Vagina (tissue), 2 donors: ENCODE measurements at regions of chr13 and their contacts with region 1.

Region 1: DNA sequence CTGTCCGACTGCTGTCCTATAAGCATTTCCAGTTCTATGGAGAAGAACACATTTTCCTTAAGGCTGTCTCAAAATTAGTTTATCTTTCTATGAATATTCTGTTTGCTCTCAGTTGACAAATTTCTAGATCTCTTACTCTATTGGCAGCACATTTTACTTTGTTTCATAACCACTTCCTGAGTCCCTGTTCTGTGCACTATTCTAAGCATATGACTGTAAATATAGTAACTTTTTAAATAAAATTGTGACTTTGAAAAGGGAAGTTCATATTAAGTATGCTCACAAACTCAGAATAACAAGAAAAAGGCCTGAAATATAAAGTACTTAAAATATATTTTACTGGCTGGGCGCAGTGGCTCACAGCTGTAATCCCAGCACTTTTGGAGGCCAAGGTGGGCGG is 56.5 kb upstream of the HTR2A start:
- DNase-seq: no peak
- H3K4me3 ChIP-seq: no peak overlapping the region
- H3K27ac ChIP-seq: no peak overlapping the region
- H3K4me1 ChIP-seq: no peaks in the 10 kb centered on the region
- H3K27me3 ChIP-seq: no peaks in the 10 kb centered on the region
- CTCF ChIP-seq: no peak
- POLR2A ChIP-seq: no peak

Region 2: DNA sequence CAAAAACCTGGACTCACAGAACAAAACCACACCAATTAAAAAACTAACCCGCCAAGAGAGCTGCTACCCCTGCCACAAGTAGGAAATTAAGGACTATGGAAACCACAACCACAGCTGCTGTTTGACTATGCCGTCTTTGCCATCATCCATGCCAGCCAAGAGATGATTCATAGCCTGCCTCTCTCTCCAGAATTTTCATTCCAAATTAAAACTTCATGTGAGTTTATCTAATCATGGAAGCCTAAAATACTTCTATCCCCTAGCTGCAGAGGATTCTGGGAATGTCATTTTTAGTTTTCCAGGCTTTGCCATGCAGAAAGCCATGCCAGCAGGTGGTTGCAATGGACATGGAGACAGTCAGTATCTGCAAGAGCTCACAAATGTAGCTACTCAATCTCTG is 1860.7 kb before region 1 on chr13:
- intact Hi-C with region 1: loop called (anchors 10 kb)
- DNase-seq: no peak
- H3K4me3 ChIP-seq: no peak overlapping the region
- H3K27ac ChIP-seq: no peak overlapping the region
- H3K4me1 ChIP-seq: no peaks in the 10 kb centered on the region
- H3K27me3 ChIP-seq: no peaks in the 10 kb centered on the region
- CTCF ChIP-seq: no peak
- POLR2A ChIP-seq: no peak

Region 3: DNA sequence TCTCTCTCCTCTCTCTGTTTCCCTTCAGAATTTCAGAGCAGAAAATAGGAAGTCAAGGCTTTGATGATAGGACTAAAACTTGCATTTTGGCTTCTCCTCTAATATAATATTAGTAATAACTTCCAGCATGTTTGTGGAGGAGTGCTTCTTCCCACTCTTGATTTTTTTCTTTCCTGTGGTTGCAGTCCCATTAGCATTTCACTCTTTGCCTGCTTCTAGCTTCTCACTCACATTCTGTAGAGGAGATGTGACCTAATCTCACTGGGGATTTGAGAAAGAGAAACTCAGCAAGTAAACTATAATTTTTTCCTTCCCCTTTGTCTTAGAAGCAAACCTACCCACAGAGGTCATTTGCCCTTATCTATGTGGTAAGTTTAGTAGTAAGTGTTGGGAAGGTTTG is 112.9 kb after region 1 on chr13:
- intact Hi-C with region 1: no loop called
- DNase-seq: no peak
- H3K4me3 ChIP-seq: no peak overlapping the region
- H3K27ac ChIP-seq: no peak overlapping the region
- H3K4me1 ChIP-seq: no peaks in the 10 kb centered on the region
- H3K27me3 ChIP-seq: no peaks in the 10 kb centered on the region
- CTCF ChIP-seq: no peak
- POLR2A ChIP-seq: no peak

Region 4: DNA sequence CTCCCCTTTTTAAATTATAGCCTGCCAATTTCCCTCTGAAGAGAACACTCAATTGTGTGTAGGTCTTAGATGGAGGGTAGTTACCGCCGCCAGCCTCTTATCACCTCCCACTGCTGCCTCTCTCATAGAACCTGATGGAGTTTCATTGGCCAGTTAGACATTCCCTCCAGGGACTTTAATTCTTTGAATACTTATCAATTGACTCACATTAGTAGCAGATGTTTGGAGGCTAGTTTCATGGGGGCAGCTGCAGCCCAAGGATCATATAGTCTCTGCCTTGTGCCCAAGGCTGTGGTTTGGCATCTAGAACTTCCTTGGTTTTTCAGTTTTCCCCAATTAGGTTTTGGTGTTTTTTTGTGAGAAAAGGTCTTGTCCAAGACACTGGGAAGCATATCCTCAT is 262.4 kb after region 1 on chr13:
- intact Hi-C with region 1: no loop called
- DNase-seq: no peak
- H3K4me3 ChIP-seq: no peak overlapping the region
- H3K27ac ChIP-seq: no peak overlapping the region
- H3K4me1 ChIP-seq: no peaks in the 10 kb centered on the region
- H3K27me3 ChIP-seq: no peaks in the 10 kb centered on the region
- CTCF ChIP-seq: no peak
- POLR2A ChIP-seq: no peak